Activated T-helper 2 cell treated with anti-CD3 and anti-CD28 coated beads, Interferon-gamma antibody, Interleukin-2, Interleukin-4, amounts not matched to agents 10 μg/mL and 5 μg/mL and 100 μg/mL, durations not matched to agents 14 hours and 24 hours and 36 hours (primary cell): ENCODE measurements at regions of chr13 and their contacts with region 1.

Region 1: GRCh38 chr13:51202477-51203046 is 19.6 kb upstream of the FAM124A start:
- DNase-seq: no peak
- H3K4me3 Mint-ChIP-seq: no peak overlapping the region
- H3K27ac Mint-ChIP-seq: no peak overlapping the region
- H3K4me1 Mint-ChIP-seq: peaks cover 9% of the 10 kb centered on the region
- H3K27me3 Mint-ChIP-seq: peaks cover 17% of the 10 kb centered on the region

Region 2: DNA sequence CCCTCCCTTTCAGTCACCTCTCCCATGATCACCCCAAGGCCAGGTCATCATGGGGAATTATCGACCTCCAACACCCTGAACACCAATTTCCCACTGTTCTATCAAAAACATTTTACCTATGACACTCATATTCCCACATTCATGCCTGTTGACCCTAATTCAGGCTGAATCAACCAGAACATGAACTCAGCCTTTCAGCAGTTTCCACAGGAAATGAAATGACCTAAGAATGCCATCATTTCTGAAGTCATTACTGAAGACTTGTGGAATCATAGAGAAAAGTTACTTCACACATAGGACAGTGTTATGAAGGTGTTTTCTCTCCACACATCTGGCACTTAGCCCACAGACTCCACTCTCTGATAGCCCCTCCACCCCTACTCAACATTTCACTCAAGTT is 10.2 kb before region 1 on chr13:
- intact Hi-C with region 1: no loop called
- DNase-seq: no peak
- H3K4me3 Mint-ChIP-seq: no peak overlapping the region
- H3K27ac Mint-ChIP-seq: no peak overlapping the region
- H3K4me1 Mint-ChIP-seq: peaks cover 6% of the 10 kb centered on the region
- H3K27me3 Mint-ChIP-seq: peaks cover 9% of the 10 kb centered on the region

Region 3: DNA sequence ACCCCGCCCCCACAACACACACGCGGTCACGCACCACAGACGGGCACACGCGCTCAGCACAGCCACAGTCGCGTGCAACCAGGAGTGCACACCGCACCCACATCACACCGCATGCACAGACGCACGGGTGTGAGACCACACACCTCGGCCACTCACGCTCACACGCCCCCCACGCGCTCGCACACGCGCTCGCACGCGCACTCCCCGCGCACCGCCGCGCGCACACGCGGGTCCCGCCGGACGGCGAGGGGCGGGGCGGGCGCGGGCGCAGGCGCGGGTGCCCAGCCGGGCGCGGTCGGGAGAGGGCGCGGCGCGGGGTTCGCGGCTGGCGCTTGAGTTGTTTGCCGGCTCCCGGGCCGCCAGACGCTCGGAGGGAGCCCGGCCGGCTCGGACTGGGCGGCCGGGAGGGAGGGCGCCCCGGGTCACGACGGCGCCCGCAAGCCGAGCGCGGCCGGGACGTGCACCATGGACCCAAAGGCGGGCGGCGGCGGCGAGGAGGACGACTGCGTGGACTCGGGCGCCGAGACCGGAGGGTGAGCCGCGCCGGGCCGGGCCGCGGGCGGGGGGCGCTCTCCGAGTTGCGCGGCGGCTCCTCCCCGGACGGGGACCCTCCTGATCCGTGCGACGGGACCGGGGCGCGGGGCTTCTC is 19.6 kb after region 1 on chr13 and contains the start of gene FAM124A:
- intact Hi-C with region 1: loop called (anchors 2 kb)
- DNase-seq: peak; percentile 29
- H3K4me3 Mint-ChIP-seq: peak within 1 kb of the TSS; percentile 66
- H3K27ac Mint-ChIP-seq: no peak within 1 kb of the TSS
- H3K4me1 Mint-ChIP-seq: no peaks in the 10 kb centered on the region
- H3K27me3 Mint-ChIP-seq: peaks cover 49% of the 10 kb centered on the region
- total RNA-seq, gene FAM124A: 0.59 and 0.64 TPM in 2 replicates

Region 4: GRCh38 chr13:51342706-51343105 is 140.1 kb after region 1 on chr13:
- intact Hi-C with region 1: no loop called
- DNase-seq: no peak
- H3K4me3 Mint-ChIP-seq: no peak overlapping the region
- H3K27ac Mint-ChIP-seq: no peak overlapping the region
- H3K4me1 Mint-ChIP-seq: peaks cover 9% of the 10 kb centered on the region
- H3K27me3 Mint-ChIP-seq: peaks cover 5% of the 10 kb centered on the region